AG04449 (cell line): ENCODE measurements at regions of chr16 and their contacts with region 1.

Region 1: GRCh38 chr16:56700195-56700594 is 17.9 kb downstream of the MT1X start:
- DNase-seq: no peak
- H3K4me3 ChIP-seq: no peak overlapping the region
- CTCF ChIP-seq: no peak

Region 2: DNA sequence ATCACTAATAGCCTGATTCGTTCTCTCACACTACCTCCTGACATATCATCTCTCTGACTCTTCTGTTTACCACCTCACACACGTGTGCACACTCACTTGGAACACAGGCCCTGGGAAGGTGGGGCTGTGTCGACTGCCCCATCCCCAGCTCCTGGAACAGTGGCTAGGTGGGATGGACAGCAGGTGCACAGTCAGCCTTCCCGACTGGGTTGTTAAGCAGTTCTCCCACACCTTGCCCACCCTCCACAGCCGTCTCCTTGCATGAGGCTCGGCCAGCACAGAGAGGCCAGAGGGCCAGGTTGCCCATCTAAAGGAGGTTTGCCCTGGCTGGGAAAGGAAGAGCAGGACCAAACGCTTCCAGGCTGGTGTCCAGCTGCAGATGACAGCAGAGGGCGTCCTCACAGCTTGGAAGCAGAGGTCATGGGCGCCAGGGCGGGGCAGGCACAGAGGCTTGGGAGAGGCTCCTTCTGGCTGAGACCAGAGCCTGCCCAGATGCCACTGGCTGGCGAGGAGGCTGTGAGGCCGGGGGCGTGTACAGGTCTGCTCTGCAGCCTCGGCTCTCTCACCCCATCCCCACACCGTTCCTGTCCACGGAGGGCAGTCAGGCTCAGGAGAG is 367.6 kb before region 1 on chr16:
- CTCF ChIA-PET with region 1: interaction called, 52 read pairs
- POLR2A ChIA-PET with region 1: no interaction called
- DNase-seq: no peak
- H3K4me3 ChIP-seq: no peak overlapping the region
- CTCF ChIP-seq: peak; percentile 67

Region 3: GRCh38 chr16:56519459-56520250 is 180.5 kb before region 1 on chr16 and contains the start of gene BBS2:
- CTCF ChIA-PET with region 1: interaction called, 60 read pairs
- POLR2A ChIA-PET with region 1: no interaction called
- DNase-seq: no peak
- H3K4me3 ChIP-seq: peak within 1 kb of the TSS; percentile 92
- CTCF ChIP-seq: no peak

Region 4: GRCh38 chr16:56583351-56584168 is 116.6 kb before region 1 on chr16:
- CTCF ChIA-PET with region 1: interaction called, 27 read pairs
- POLR2A ChIA-PET with region 1: no interaction called
- DNase-seq: no peak
- H3K4me3 ChIP-seq: no peak overlapping the region
- CTCF ChIP-seq: no peak

Region 5: DNA sequence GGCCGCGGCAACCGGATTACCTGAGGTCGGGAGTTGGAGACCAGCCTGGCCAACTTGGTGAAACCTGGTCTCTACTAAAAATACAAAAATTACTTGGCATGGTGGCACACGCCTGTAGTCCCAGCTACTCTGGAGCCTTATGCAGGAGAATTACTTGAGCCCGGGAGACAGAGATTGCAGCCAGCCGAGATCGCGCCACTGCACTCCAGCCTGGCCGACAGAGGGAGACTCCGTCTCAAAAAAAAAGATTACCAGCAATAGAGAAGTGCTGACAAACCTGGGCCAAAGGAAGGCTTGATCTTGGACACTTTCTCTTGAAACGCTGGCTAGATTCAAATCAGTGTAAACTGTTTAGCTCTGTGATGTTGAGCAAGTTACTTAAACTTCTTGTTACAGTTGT is 26.3 kb before region 1 on chr16:
- CTCF ChIA-PET with region 1: interaction called, 18 read pairs
- POLR2A ChIA-PET with region 1: no interaction called
- DNase-seq: no peak
- H3K4me3 ChIP-seq: no peak overlapping the region
- CTCF ChIP-seq: peak; percentile 48

Region 6: DNA sequence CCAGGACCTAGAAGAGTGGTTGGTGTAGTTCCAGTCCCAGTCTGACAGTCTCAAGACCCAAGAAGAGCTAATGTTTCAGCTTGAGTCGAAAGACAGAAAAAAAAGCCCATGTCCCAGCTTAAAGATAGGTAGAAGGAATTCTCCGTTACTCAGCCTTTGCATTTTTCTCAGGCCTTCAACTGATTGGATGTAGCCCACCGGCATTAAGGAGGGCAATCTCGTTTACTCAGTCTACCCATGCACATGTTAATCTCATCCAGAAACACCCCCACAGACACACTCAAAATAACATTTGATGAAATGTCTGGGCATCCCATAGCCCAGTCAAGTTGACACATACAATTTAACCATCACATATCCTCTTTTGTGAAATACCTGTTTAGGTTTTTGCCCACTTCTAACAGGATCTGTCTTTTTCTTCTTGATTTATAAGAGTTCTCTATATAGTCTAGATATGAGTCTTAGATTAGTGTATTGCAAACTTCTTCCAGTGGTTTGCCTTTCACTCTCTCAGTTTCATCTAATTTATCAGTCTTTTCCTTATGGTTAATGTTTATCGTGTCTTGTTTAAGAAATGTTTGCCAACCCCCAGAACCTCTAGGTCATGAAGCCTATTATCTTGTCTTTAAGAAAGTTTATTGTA is 22.1 kb after region 1 on chr16:
- CTCF ChIA-PET with region 1: interaction called, 21 read pairs
- POLR2A ChIA-PET with region 1: no interaction called
- DNase-seq: no peak
- H3K4me3 ChIP-seq: no peak overlapping the region
- CTCF ChIP-seq: no peak